ENCODE measurements at regions of chr1 and their contacts with region 1.

Region 1: DNA sequence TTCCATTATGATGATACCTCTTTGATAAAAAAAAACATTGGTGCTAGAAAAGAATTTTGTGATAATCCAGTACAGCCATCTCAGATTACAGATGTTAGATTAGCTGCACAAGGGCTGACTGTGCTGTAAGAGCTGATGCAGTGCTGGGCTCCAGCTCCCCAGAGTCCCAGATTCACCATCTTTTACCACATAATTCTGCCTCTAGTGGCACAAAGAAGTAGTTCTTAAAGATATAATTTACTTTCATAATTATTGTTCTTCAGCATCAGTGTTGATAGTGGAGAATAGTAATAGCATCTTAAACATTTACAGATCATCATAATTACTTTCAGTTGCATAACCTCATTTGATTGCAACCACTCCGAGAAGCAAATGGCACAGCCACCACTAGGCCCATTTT is 262.1 kb downstream of the BRINP2 start:
- DNase-seq: no peak
- H3K4me3 ChIP-seq: no peak overlapping the region
- H3K27ac ChIP-seq: no peak overlapping the region
- H3K4me1 ChIP-seq: no peaks in the 10 kb centered on the region
- H3K27me3 ChIP-seq: peaks cover 0 to 1% (median 0%) of the 10 kb centered on the region in 4 experiments; a peak in 1 of 7 replicates
- CTCF ChIP-seq: peak in 1 of 3 experiments; percentile 38; a peak in 2 of 4 replicates
- EP300 ChIP-seq: no peak
- POLR2A ChIP-seq: no peak
- RAD21 ChIP-seq: peak; percentile 21 to 27; a peak in 3 of 4 replicates

Region 2: DNA sequence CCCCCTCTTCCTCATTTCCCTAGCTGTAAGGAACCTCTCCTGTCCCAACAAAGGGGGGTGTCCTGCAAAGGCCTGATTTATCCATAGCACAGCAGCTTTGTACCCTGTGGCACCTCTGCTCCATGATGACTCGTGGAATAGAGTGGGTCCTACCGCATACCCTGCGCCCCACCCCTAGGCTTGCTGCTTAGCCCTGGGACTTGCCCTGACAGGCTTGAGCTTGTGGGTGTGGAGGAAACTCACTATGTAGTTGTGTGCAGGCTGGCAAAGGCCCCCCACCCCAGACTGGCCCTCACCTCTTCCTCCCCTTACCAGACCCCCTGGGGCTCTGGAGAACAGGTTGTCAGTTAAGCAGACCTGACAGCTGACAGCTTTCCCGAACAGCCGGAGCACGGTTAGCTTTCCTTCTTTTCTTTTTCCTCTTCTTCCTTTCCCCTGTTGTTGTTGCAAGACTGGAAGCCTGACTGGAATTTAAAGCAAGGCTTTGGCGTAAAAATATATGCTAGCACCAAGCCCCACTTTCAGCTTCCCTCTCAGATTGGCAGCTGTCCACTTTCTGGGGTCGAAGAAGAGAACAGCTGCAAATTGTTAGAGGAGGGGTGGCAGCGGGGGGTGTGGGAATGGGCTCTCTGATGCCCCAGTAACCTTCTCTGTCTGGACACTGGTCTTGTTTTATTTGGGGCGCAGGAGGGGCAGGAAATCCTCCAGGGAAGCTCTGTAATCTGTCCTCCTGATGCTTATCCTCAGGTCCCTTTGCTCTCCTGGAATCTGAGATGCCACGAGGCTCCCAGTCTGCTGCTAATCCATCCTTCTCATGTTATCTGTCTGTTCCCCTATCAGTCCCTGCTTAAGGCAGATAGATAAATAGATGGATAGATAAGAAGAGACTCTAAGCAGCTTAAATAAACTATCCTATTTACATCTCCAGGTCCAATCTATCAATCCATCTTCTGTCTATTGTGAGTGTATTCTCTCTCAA is 127.6 kb before region 1 on chr1:
- CTCF ChIA-PET with region 1: no interaction called
- POLR2A ChIA-PET with region 1: no interaction called
- DNase-seq: no peak
- H3K4me3 ChIP-seq: no peak overlapping the region
- H3K27ac ChIP-seq: no peak overlapping the region
- H3K4me1 ChIP-seq: no peaks in the 10 kb centered on the region; a peak in 3 of 7 replicates
- H3K27me3 ChIP-seq: no peaks in the 10 kb centered on the region
- CTCF ChIP-seq: no peak
- EP300 ChIP-seq: no peak
- POLR2A ChIP-seq: no peak
- RAD21 ChIP-seq: no peak

Region 3: DNA sequence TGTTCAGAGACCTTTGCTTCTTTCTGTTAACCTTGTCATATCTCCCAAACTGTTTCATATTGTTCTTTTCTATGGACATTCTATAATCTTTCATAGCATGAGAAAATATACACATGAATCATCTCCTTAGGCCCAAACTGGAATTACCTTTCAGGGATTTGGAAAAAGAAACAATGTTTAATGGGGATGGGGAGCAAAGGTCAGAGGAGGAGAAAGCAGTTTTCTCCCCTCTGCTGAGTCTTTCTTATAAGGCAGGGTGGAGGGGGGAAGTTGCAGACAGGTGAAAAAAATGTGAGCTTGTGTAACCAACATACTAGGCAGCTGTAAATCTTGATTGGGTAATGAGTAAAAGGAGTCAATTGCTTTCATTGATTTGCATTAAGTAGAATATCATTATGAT is 98.0 kb before region 1 on chr1:
- CTCF ChIA-PET with region 1: no interaction called
- POLR2A ChIA-PET with region 1: no interaction called
- DNase-seq: no peak
- H3K4me3 ChIP-seq: no peak overlapping the region
- H3K27ac ChIP-seq: no peak overlapping the region
- H3K4me1 ChIP-seq: no peaks in the 10 kb centered on the region
- H3K27me3 ChIP-seq: no peaks in the 10 kb centered on the region
- CTCF ChIP-seq: no peak
- EP300 ChIP-seq: no peak
- POLR2A ChIP-seq: no peak
- RAD21 ChIP-seq: no peak

Region 4: GRCh38 chr1:177444990-177445761 is 12.3 kb after region 1 on chr1:
- CTCF ChIA-PET with region 1: interaction called, 13 read pairs
- POLR2A ChIA-PET with region 1: no interaction called
- DNase-seq: no peak
- H3K4me3 ChIP-seq: no peak overlapping the region
- H3K27ac ChIP-seq: no peak overlapping the region
- H3K4me1 ChIP-seq: no peaks in the 10 kb centered on the region; a peak in 1 of 7 replicates
- H3K27me3 ChIP-seq: no peaks in the 10 kb centered on the region
- CTCF ChIP-seq: no peak
- EP300 ChIP-seq: no peak
- POLR2A ChIP-seq: no peak
- RAD21 ChIP-seq: no peak

Measured in H1 (cell line).